ENCODE measurements at regions of chr1 and their contacts with region 1.

Region 1: DNA sequence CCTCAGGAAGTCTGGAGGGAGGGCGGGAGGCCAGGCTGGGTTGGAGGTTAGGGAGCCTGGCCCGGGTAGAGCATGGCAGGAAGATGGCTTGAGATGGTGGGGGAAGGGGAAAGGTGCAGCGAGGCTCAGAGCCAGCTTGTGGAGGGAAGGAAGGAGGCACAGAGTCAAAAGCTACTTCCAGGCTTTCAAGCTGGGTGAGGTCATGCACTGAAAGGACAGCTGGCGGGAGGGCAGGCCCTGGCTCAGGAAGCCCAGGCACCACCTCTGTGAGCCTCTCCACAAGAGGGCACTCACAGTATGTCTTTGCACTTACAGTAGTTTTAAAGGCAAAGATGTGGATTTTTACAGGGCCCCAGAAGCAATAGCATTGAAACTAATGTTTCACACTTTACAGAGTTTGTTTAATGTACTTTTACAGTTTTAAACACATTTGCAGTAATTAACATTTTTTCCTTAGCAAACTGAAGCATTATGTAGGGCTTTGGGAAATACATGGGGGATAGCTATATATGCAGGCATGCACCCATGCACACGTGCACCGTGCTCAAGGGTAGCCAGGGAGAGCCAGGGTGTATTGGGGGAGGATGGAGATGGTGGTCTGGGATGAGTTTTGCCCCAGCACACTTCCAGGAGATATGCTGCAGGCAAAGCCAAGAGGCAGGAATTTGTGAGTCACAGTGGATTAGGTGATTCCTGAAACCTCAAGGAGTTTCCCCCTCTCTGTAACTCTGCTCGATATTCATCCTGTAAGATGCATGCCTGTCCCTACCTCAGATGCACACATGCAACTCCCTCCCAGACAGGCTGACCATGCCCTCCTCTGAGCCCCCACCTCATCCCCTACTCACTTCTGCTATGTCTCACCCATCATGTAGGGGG is 6.1 kb upstream of the ADAM15 start:
- DNase-seq: peak; percentile 81
- CTCF ChIP-seq: peak; percentile 67

Region 2: GRCh38 chr1:154453574-154454352 is 591.3 kb before region 1 on chr1:
- CTCF ChIA-PET with region 1: no interaction called
- POLR2A ChIA-PET with region 1: no interaction called
- DNase-seq: no peak
- CTCF ChIP-seq: no peak

Region 3: GRCh38 chr1:154925335-154926170 is 119.5 kb before region 1 on chr1:
- CTCF ChIA-PET with region 1: no interaction called
- POLR2A ChIA-PET with region 1: no interaction called
- DNase-seq: no peak
- CTCF ChIP-seq: no peak

Region 4: DNA sequence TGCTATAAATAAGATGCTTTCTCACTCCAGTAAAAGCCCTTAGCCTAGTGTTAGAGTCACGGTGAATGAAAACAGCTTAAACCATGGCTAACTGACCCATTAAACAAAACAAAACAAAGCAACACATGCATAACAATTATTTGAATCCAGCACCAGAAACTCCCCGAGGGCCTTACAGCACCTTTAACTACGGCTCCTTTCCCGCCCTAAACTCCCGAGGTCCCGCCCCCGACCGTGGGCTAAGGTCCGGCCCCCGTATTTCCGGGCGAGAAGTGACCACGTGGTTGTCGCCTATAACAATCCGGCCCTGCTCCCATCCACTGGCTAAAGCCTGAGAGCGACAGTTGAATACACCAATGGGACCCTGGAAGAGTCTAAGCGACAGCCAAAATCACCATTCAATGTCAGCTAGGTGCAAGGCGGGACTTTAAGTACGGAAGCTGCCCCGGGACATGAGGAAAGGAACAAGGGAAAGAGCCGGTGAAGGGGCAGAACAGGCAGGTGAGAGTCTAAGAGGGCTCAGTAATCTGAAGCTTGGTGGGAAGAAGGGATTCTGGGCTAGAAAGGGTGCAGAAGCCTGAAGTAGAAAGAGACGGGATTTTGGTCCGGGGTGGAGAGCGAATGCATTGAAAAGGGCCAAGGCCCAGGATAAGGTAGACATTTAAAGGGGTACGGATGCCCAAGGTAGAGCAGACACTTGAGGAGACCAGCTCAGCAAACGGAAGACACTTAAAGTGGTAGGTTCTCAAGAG is 62.0 kb before region 1 on chr1 and contains the start of gene FLAD1:
- CTCF ChIA-PET with region 1: no interaction called
- POLR2A ChIA-PET with region 1: no interaction called
- DNase-seq: peak; percentile 98
- CTCF ChIP-seq: no peak

Region 5: DNA sequence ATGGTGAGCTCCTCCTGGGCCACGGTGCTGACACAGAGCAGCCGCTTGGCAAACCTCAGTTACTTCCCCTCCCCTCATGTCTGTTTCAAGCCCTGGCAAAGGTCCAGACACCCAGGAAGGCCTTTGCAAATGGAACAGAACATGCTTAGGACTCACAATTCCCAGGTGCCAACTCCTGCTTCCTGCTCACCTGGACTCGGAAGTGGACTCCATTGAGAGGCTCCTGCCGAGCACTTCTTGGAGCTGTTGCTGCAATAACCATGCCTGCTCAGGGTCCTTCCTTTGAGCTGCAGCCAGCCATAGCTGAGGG is 22.2 kb before region 1 on chr1:
- CTCF ChIA-PET with region 1: interaction called, 67 read pairs
- POLR2A ChIA-PET with region 1: no interaction called
- DNase-seq: no peak
- CTCF ChIP-seq: no peak

Measured in GM10248 (cell line).